ENCODE measurements at regions of chr18 and their contacts with region 1.

Region 1: DNA sequence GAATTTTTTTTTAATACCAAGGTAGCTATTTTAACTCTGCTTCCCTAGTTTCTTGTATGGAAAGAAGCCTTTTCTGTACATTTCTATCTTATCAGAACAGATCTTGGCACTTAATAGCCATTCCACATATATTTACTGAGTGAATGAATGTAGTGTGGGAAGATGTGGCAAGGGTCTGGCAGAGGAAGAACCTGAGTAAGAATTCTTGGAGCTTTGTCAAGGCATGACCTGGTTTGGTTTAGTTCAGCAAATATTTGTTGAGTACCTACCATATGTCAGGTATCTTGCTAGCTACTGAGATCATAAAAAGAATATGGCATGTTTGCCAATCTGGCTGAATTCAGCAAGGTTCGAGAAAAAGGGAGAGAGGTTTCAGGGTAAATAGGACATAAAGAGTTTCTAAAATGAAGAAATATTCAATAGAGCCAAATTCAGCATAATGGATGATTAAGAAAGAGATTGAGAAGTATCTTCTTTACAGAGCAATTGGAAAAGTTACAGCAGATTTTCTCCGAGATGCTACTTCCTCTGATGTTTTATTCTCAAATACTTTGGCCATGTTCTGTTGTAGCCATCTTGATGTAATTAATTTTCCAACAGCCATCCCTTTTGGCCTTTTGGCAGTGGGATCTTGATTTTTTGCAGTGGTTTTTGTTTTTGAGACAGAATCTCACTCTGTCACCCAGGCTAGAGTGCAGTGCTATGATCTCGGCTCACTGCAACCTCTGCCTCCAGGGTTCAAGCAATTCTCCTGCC is 21.7 kb upstream of the MEP1B start:
- DNase-seq: no peak
- H3K4me3 ChIP-seq: no peak overlapping the region
- H3K27ac ChIP-seq: peak overlapping the region in 1 of 2 donors; percentile 25
- H3K4me1 ChIP-seq: no peaks in the 10 kb centered on the region
- H3K27me3 ChIP-seq: no peaks in the 10 kb centered on the region
- CTCF ChIP-seq: no peak
- POLR2A ChIP-seq: no peak

Region 2: GRCh38 chr18:32138332-32138982 is 29.7 kb before region 1 on chr18:
- intact Hi-C with region 1: no loop called
- DNase-seq: no peak
- H3K4me3 ChIP-seq: no peak overlapping the region
- H3K27ac ChIP-seq: no peak overlapping the region
- H3K4me1 ChIP-seq: no peaks in the 10 kb centered on the region
- H3K27me3 ChIP-seq: no peaks in the 10 kb centered on the region
- CTCF ChIP-seq: no peak
- POLR2A ChIP-seq: no peak

Region 3: DNA sequence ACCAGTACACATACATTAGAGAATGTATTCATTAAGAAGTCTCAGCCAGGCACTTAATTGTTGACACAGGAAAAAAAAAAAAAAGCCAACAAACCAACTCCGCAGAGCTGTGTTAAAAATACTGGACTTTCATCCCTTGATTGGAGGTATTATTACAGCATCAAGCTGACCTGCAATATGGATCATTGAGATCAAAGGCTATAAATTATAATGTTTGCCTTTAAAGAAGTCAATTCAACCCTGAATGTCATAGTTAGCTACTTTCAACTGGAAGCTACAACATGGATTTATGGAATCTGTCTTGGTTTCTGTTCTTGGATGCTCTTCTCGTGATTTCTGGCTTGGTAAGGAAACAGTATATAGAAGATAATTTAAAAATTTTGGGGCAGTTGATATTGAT is 21.6 kb after region 1 on chr18 and contains the start of gene MEP1B:
- intact Hi-C with region 1: loop called (anchors 2 kb)
- DNase-seq: no peak
- H3K4me3 ChIP-seq: no peak within 1 kb of the TSS
- H3K27ac ChIP-seq: no peak within 1 kb of the TSS
- H3K4me1 ChIP-seq: no peaks in the 10 kb centered on the region
- H3K27me3 ChIP-seq: no peaks in the 10 kb centered on the region
- CTCF ChIP-seq: no peak
- POLR2A ChIP-seq: no peak
- total RNA-seq, gene MEP1B: 0.15 to 0.33 TPM in 2 of 3 donors, not detected in the other

Region 4: DNA sequence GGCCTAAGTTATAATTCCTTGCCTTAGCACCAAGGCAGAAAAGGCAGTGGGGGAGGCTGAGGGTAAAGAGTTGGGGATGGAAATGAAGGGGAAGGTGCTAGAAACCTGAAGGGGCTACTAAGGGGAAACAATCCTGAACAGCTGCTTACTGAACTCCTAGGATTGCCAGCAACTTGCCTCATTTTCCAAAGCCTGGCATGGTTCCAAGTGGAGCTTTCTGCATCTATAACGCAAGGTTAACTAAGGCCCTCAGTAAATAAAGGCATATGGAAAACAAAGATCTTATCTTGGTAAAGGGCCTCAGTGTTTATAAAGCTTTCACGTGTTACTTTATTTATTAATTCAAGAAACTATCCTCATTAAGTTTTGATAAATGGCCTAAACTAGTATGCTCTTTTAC is 32.6 kb after region 1 on chr18:
- intact Hi-C with region 1: loop called (anchors 1 kb)
- DNase-seq: no peak
- H3K4me3 ChIP-seq: no peak overlapping the region
- H3K27ac ChIP-seq: no peak overlapping the region
- H3K4me1 ChIP-seq: no peaks in the 10 kb centered on the region
- H3K27me3 ChIP-seq: no peaks in the 10 kb centered on the region
- CTCF ChIP-seq: no peak
- POLR2A ChIP-seq: no peak